AG04449 (cell line): ENCODE measurements at regions of chr5 and their contacts with region 1.

Region 1: GRCh38 chr5:168291464-168291961 is at the start of gene WWC1:
- DNase-seq: no peak
- H3K4me3 ChIP-seq: peak within 1 kb of the TSS; percentile 68
- CTCF ChIP-seq: peak; percentile 27

Region 2: GRCh38 chr5:167908606-167909005 is 382.9 kb before region 1 on chr5:
- CTCF ChIA-PET with region 1: no interaction called
- POLR2A ChIA-PET with region 1: no interaction called
- DNase-seq: no peak
- H3K4me3 ChIP-seq: no peak overlapping the region
- CTCF ChIP-seq: no peak

Region 3: DNA sequence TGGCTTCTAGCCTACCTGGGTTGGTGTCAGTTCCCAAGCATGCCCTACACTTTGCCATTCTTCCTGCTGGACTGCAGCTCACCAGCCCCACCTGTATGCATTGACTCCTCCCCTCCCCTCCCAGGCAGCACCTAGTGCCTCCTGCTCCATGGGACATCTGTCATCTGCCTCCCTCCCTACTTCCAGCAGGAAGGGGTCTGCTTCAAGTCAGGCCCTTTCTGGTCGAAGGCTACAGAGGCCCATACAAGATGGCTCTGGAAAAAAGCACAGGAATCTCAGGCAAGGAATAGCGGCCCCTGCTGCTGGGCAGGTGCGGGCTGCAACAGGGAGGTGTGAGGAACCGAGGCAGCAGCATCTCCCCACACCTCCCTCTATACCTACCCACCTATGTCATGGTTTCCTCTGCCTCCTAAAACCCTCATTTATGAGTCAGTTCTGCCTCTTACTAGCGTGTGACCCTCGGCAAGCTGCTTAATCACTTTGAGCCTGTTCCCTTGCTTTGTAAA is 19.6 kb after region 1 on chr5:
- CTCF ChIA-PET with region 1: interaction called, 87 read pairs
- POLR2A ChIA-PET with region 1: no interaction called
- DNase-seq: no peak
- H3K4me3 ChIP-seq: no peak overlapping the region
- CTCF ChIP-seq: no peak

Region 4: GRCh38 chr5:168328814-168329213 is 37.3 kb after region 1 on chr5:
- CTCF ChIA-PET with region 1: interaction called, 17 read pairs
- POLR2A ChIA-PET with region 1: no interaction called
- DNase-seq: no peak
- H3K4me3 ChIP-seq: no peak overlapping the region
- CTCF ChIP-seq: no peak

Region 5: GRCh38 chr5:168422431-168422830 is 130.9 kb after region 1 on chr5:
- CTCF ChIA-PET with region 1: no interaction called
- POLR2A ChIA-PET with region 1: no interaction called
- DNase-seq: no peak
- H3K4me3 ChIP-seq: no peak overlapping the region
- CTCF ChIP-seq: no peak

Region 6: GRCh38 chr5:168472329-168472728 is 180.8 kb after region 1 on chr5:
- CTCF ChIA-PET with region 1: interaction called, 12 read pairs
- POLR2A ChIA-PET with region 1: no interaction called
- DNase-seq: peak; percentile 91
- H3K4me3 ChIP-seq: no peak overlapping the region
- CTCF ChIP-seq: peak; percentile 31